ENCODE measurements at regions of chr10 and their contacts with region 1.

Region 1: GRCh38 chr10:23314835-23315239 is 29.8 kb downstream of the C10orf67 start:
- DNase-seq: peak in 1 of 3 donors; percentile 90
- ATAC-seq: peak; percentile 88
- H3K4me3 ChIP-seq: no peak overlapping the region
- H3K4me1 ChIP-seq: no peaks in the 10 kb centered on the region
- CTCF ChIP-seq: peak; percentile 52

Region 2: GRCh38 chr10:23525406-23525805 is 210.6 kb after region 1 on chr10:
- intact Hi-C with region 1: loop called (anchors 5 kb)
- DNase-seq: peak in 1 of 3 donors; percentile 50
- ATAC-seq: peak; percentile 77
- H3K4me3 ChIP-seq: no peak overlapping the region
- H3K4me1 ChIP-seq: no peaks in the 10 kb centered on the region
- CTCF ChIP-seq: no peak

Region 3: GRCh38 chr10:23702977-23703414 is 388.2 kb after region 1 on chr10:
- intact Hi-C with region 1: loop called in 1 of 2 experiments (anchors 10 kb)
- DNase-seq: peak in 2 of 3 donors; percentile 29 to 59
- ATAC-seq: peak; percentile 87
- H3K4me3 ChIP-seq: no peak overlapping the region
- H3K4me1 ChIP-seq: no peaks in the 10 kb centered on the region
- CTCF ChIP-seq: peak; percentile 33

Measured in mucosa of descending colon (tissue), 3 donors.